ENCODE measurements at regions of chr9 and their contacts with region 1.

Region 1: GRCh38 chr9:107489687-107490605 is at the start of gene KLF4:
- DNase-seq: peak; percentile 91
- H3K4me3 ChIP-seq: peak within 1 kb of the TSS; percentile 93 to 97 (median 94)
- H3K27ac ChIP-seq: peak within 1 kb of the TSS; percentile 83
- H3K4me1 ChIP-seq: peaks cover 39% of the 10 kb centered on the region
- H3K27me3 ChIP-seq: no peaks in the 10 kb centered on the region
- CTCF ChIP-seq: no peak
- total RNA-seq, gene KLF4: 20.5 to 52.5 TPM

Region 2: GRCh38 chr9:107597743-107598217 is 107.8 kb after region 1 on chr9:
- CTCF ChIA-PET with region 1: no interaction called
- dilution Hi-C with region 1: no loop called
- in situ Hi-C with region 1: no loop called
- intact Hi-C with region 1: no loop called
- DNase-seq: no peak
- H3K4me3 ChIP-seq: no peak overlapping the region
- H3K27ac ChIP-seq: no peak overlapping the region
- H3K4me1 ChIP-seq: no peaks in the 10 kb centered on the region
- H3K27me3 ChIP-seq: no peaks in the 10 kb centered on the region
- CTCF ChIP-seq: no peak

Region 3: DNA sequence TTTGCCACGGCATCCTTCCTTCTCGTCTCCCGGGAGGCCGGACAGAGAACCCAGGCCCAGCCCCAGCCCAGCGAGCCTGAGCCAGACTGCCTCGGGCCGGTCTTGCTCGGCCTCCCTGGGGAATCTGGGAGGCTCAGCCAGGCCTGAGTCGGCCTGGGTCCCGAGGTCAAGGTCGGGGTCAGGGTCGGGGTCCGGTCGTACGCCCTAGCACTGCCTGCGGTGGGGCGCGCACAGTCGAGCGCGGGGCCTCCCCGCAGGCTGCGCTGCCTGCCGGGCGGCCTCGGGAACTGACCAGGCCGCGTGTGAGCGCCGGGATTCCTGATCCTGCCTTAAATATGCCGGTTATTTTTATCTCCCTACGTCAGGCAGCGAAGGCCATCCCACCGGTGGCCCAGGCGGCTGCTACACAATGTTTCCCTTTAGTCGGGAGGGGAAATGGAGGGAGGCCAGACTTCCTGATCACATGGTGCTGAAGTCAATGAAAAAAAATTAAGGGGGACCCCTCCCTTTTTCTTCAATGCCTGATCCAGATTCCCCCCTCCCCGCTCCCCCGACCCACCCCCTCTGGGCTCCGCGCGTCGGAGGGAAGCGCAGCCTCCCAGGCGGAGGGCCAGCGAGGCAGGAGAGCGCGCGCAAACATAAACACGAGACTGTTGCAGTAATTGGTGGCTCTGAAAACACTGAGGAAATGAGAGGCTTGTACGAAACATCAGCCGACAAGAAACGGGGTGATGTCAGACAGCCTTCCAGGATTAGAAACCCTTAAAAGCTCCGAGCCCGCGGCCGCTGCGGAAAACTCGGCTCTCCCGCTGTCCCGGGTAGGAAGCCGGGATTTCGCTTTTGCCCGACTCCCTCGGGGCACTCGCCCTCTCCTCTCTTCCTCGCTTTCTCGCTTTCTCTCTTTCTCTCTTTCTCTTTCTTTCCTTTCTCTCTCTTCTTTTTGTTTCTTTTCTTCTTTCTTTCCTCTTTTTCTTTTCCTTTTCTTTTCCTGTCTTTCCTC is 147.8 kb after region 1 on chr9:
- CTCF ChIA-PET with region 1: no interaction called
- dilution Hi-C with region 1: no loop called
- in situ Hi-C with region 1: no loop called
- intact Hi-C with region 1: loop called (anchors 5 kb)
- DNase-seq: peak; percentile 50
- H3K4me3 ChIP-seq: peak overlapping the region; percentile 39 to 68 (median 54)
- H3K27ac ChIP-seq: no peak overlapping the region
- H3K4me1 ChIP-seq: no peaks in the 10 kb centered on the region
- H3K27me3 ChIP-seq: no peaks in the 10 kb centered on the region
- CTCF ChIP-seq: no peak

Region 4: GRCh38 chr9:107749787-107750444 is 260.0 kb after region 1 on chr9:
- CTCF ChIA-PET with region 1: no interaction called
- dilution Hi-C with region 1: no loop called
- in situ Hi-C with region 1: no loop called
- intact Hi-C with region 1: loop called (anchors 1 kb)
- DNase-seq: peak; percentile 88
- H3K4me3 ChIP-seq: no peak overlapping the region
- H3K27ac ChIP-seq: peak overlapping the region; percentile 60
- H3K4me1 ChIP-seq: peaks cover 36% of the 10 kb centered on the region
- H3K27me3 ChIP-seq: no peaks in the 10 kb centered on the region
- CTCF ChIP-seq: no peak

Region 5: GRCh38 chr9:108002371-108002956 is 512.5 kb after region 1 on chr9:
- CTCF ChIA-PET with region 1: no interaction called
- dilution Hi-C with region 1: no loop called
- in situ Hi-C with region 1: no loop called
- intact Hi-C with region 1: loop called (anchors 5 kb)
- DNase-seq: no peak
- H3K4me3 ChIP-seq: no peak overlapping the region
- H3K27ac ChIP-seq: no peak overlapping the region
- H3K4me1 ChIP-seq: peaks cover 15% of the 10 kb centered on the region
- H3K27me3 ChIP-seq: no peaks in the 10 kb centered on the region
- CTCF ChIP-seq: no peak

Region 6: GRCh38 chr9:108551030-108551838 is 1061.3 kb after region 1 on chr9:
- CTCF ChIA-PET with region 1: no interaction called
- dilution Hi-C with region 1: no loop called
- in situ Hi-C with region 1: no loop called
- intact Hi-C with region 1: loop called (anchors 5 kb)
- DNase-seq: peak; percentile 98
- H3K4me3 ChIP-seq: peak overlapping the region in 1 of 3 experiments; percentile 9
- H3K27ac ChIP-seq: peak overlapping the region; percentile 99
- H3K4me1 ChIP-seq: peaks cover 60% of the 10 kb centered on the region
- H3K27me3 ChIP-seq: no peaks in the 10 kb centered on the region
- CTCF ChIP-seq: peak in 1 of 2 donors; percentile 10